OCI-LY7 (cell line): ENCODE measurements at regions of chr9 and their contacts with region 1.

Region 1: GRCh38 chr9:37119907-37120842 is at the start of gene ZCCHC7:
- DNase-seq: peak; percentile 96
- H3K4me3 ChIP-seq: peak within 1 kb of the TSS; percentile 96
- H3K27ac ChIP-seq: peak within 1 kb of the TSS; percentile 65
- H3K4me1 ChIP-seq: peaks cover 43% of the 10 kb centered on the region
- CTCF ChIP-seq: no peak
- total RNA-seq, gene ZCCHC7: 108 and 110 TPM in 2 replicates

Region 2: DNA sequence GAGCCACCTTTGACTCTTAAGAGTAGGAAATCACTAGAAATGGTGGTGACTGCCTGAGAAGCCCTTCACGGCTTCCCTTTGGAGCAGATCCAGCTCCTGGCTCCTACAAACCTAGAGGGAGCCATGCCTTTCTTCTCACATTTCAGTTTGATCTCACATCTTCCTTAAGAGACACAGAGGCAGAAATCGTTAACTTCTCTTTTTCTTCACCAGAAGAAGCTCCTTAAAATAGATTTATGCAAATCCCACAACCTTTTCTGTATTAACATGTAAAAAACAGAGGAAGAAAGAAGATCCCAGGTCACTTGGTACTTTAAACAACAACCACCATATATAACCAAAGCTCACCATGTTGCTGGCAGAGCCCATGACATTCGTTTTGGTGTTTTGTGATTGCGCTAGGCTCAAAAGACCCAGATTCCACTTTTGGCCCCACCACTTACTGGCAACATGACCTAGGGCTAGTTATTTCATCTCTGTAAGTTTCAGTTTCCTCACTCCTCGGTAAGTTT is 115.7 kb before region 1 on chr9:
- CTCF ChIA-PET with region 1: no interaction called
- POLR2A ChIA-PET with region 1: no interaction called
- intact Hi-C with region 1: loop called (anchors 5 kb)
- DNase-seq: peak; percentile 87
- H3K4me3 ChIP-seq: peak overlapping the region; percentile 56
- H3K27ac ChIP-seq: peak overlapping the region; percentile 96
- H3K4me1 ChIP-seq: peaks cover 100% of the 10 kb centered on the region
- CTCF ChIP-seq: peak; percentile 48; the same call in 1 of the 2 replicates

Region 3: DNA sequence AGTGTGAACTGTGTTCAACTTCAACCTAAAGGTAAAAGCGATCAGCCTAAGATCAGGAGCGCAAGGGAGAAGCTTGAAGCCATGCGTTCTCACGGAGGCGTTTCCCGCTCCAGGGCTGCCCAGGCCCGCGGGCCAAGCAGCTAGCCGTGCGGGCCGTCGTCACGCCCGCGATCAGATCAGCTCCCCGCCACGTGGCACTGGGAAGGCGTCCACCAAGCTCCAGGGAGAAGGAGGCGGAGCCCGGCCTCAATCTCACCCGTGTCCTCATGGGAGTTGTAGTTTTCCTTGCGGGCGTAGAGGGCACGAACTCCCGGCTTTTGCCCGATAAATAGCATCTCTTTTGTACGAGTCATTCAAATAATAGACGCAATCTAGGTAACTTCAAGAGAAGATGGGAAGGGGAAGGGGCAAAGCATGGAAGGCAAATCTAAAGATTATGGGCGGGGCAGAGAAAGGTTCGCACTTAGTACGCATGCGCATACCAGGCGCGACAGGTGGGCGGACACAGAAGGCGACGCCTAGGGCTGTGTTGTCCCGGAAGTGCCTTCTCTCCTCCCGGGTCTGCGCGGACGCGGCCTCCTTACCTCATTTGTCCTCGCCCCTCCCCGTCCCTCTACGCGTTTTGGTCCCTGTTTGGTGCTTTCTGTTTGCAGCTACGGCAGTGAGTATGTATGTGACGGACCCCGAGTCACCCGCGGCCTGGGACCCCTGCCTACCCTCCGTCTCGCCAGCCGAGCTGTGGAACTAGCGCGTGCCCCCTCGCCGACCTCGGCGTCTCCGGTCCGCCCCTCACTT is 40.6 kb before region 1 on chr9:
- CTCF ChIA-PET with region 1: no interaction called
- POLR2A ChIA-PET with region 1: interaction called, 20 read pairs
- intact Hi-C with region 1: loop called (anchors 2 kb)
- DNase-seq: peak; percentile 97
- H3K4me3 ChIP-seq: peak overlapping the region; percentile 90
- H3K27ac ChIP-seq: peak overlapping the region; percentile 70
- H3K4me1 ChIP-seq: peaks cover 63% of the 10 kb centered on the region
- CTCF ChIP-seq: no peak

Region 4: DNA sequence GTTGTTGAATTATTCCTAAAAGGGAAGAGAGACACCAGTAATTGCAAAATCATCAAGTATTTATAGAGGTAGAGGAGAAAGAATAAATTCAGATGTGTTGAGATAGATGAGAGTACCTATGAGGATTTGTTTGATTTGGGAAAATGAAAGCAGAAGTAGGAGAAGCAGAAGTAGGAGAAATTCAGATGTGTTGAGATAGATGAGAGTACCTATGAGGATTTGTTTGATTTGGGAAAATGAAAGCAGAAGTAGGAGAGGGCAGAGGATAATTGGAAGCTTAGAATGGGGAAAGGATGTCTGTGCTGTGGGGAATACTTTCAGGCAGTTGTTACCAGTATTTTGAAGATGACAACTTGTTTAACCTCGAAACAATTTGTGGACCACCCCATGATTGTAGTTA is 34.9 kb before region 1 on chr9:
- CTCF ChIA-PET with region 1: no interaction called
- POLR2A ChIA-PET with region 1: interaction called, 20 read pairs
- intact Hi-C with region 1: loop called (anchors 2 kb)
- DNase-seq: no peak
- H3K4me3 ChIP-seq: peak overlapping the region; percentile 90
- H3K27ac ChIP-seq: peak overlapping the region; percentile 70
- H3K4me1 ChIP-seq: peaks cover 46% of the 10 kb centered on the region
- CTCF ChIP-seq: no peak

Region 5: DNA sequence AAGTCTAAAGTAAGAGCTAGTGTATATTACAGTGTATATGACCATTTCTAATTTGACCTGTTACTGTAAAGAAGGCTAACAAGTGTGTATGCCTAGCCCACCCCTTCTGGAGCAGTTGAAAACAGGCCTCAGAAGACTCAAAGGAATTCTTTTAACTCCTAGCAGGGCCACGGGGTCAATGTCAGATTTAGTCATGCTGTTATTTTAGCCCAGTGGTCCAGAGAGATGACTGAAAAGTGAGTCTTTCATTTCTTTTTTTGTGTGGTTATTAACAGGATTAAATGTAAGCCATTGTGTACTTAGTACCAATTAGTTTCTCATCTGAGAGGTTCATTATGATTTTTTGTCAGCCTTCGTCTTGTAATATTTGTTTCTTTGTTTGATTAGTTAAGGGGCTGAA is 24.6 kb after region 1 on chr9:
- CTCF ChIA-PET with region 1: no interaction called
- POLR2A ChIA-PET with region 1: interaction called, 28 read pairs
- intact Hi-C with region 1: no loop called
- DNase-seq: peak; percentile 65
- H3K4me3 ChIP-seq: peak overlapping the region; percentile 61
- H3K27ac ChIP-seq: peak overlapping the region; percentile 74
- H3K4me1 ChIP-seq: peaks cover 85% of the 10 kb centered on the region
- CTCF ChIP-seq: no peak

Region 6: DNA sequence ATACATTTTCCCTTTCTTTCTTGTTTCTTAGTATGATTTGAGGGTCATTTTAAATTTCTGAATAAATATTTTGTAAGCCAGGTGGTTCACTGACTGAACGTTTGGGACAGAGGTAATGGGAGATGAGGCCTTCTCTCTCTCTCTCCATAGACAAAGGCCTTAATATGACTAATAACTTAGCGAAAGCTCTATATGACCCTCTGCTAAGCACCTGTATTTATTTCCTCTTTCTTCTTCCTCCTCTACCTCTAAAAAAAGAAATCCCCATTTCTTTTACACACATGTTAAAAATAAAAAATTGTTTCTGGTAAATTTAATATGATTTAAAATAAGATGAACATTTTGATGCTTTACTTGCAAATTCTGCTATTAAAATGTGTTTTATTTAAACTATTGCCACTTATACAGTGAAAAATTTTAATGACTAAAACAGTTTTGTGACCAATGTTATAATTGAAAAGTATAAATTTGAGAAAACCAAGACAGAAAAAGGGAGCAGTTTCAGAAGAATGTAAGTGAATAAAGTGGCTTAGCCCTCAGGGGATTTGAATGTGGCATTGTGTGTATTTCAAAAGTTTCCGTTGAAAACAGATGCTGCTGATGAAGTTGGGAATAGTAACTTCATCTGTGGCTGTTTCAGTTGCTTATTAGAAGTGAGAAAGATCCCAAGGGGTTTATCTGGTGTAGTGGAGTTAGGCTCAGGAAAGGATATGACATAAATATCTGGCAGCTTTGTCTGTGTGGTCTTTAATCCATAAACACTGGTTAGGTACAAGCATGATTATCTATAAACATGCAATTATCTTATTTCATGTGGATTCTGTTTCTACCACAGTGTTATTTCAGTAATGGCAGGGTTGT is 173.7 kb after region 1 on chr9:
- CTCF ChIA-PET with region 1: interaction called, 3 read pairs
- POLR2A ChIA-PET with region 1: interaction called, 5 read pairs
- intact Hi-C with region 1: loop called (anchors 2 kb)
- DNase-seq: peak; percentile 97
- H3K4me3 ChIP-seq: peak overlapping the region; percentile 46
- H3K27ac ChIP-seq: peak overlapping the region; percentile 99
- H3K4me1 ChIP-seq: peaks cover 100% of the 10 kb centered on the region
- CTCF ChIP-seq: no peak

Region 7: GRCh38 chr9:37329576-37329975 is 209.4 kb after region 1 on chr9:
- CTCF ChIA-PET with region 1: no interaction called
- POLR2A ChIA-PET with region 1: interaction called, 13 read pairs
- intact Hi-C with region 1: loop called (anchors 2 kb)
- DNase-seq: peak; percentile 88
- H3K4me3 ChIP-seq: peak overlapping the region; percentile 44
- H3K27ac ChIP-seq: peak overlapping the region; percentile 98
- H3K4me1 ChIP-seq: peaks cover 99% of the 10 kb centered on the region
- CTCF ChIP-seq: peak; percentile 96